Tibial artery (tissue), 4 donors: ENCODE measurements at regions of chr21 and their contacts with region 1.

Region 1: GRCh38 chr21:26698416-26698815 is 125.3 kb upstream of the CYYR1 start:
- DNase-seq: no peak
- H3K4me3 ChIP-seq: no peak overlapping the region
- H3K27ac ChIP-seq: no peak overlapping the region
- H3K4me1 ChIP-seq: no peaks in the 10 kb centered on the region
- H3K27me3 ChIP-seq: no peaks in the 10 kb centered on the region
- CTCF ChIP-seq: no peak

Region 2: DNA sequence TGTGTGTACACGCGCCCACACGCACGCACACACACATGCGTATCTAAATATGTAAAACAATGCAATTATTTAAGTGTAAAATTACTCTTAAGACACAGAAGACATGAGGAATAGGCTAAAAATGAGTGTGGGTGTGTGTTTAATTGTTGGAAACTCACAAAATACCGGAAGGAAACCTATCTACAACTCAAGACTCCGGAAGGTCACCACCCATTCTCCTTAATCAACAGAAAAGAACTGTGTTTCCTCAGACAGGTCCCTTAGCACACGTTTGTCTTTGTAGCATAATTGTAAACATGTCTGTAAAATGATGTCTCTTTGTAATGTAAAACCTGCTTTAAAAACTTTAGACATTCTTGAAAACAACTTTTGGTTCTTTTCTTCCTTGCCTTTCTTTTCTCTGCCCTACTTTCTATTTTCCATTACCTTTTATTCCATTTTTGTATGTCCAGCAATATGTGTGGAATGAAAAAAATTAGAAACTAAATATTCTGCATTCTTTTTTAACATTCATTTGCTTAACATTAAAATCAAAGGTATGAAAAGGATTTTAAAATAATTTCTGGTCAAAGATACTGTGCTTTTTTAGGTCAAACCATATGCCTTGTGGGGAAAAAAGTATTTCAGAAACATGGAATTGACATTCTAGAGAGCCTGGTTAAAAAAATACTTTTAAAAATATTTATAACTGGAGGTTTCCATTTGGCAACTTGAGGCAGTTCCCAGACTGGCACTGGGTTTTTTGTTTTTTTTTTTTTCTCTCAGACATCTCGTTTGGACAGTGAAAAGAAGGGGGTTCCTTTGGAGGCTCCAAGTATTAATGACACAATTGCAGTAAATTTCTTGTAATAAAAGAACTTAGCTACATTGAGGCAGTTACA is 1009.9 kb before region 1 on chr21:
- intact Hi-C with region 1: no loop called
- DNase-seq: no peak
- H3K4me3 ChIP-seq: no peak overlapping the region
- H3K27ac ChIP-seq: peak overlapping the region in 1 of 2 donors; percentile 2
- H3K4me1 ChIP-seq: peaks cover 0 to 19% (median 2%) of the 10 kb centered on the region in 4 donors
- H3K27me3 ChIP-seq: no peaks in the 10 kb centered on the region
- CTCF ChIP-seq: no peak

Region 3: GRCh38 chr21:26637201-26637745 is 61.1 kb before region 1 on chr21:
- intact Hi-C with region 1: loop called (anchors 10 kb)
- DNase-seq: no peak
- H3K4me3 ChIP-seq: no peak overlapping the region
- H3K27ac ChIP-seq: no peak overlapping the region
- H3K4me1 ChIP-seq: no peaks in the 10 kb centered on the region
- H3K27me3 ChIP-seq: no peaks in the 10 kb centered on the region
- CTCF ChIP-seq: no peak

Region 4: DNA sequence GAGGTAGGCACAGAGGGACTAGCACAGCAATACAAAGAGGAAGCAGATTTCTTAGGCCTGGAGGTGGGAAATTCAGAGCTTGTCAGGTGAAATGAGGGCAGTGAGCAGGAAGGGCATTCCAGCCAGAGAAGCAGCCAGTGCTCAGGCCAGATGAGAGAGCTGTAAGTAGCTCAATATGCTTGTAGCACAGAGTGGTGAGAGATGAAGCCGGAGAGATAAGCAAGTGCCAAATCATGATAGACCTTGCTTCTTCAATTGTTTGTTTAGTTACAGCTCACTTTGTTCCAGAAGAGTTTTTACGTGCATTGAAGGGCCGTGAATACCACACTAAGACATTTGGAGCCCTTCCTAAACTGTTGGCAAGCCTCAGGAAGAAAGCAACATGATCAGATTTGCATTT is 188.8 kb after region 1 on chr21:
- intact Hi-C with region 1: no loop called
- DNase-seq: no peak
- H3K4me3 ChIP-seq: no peak overlapping the region
- H3K27ac ChIP-seq: no peak overlapping the region
- H3K4me1 ChIP-seq: peaks cover 0 to 25% (median 0%) of the 10 kb centered on the region in 4 donors
- H3K27me3 ChIP-seq: no peaks in the 10 kb centered on the region
- CTCF ChIP-seq: no peak